OCI-LY7 (cell line): ENCODE measurements at regions of chr4 and their contacts with region 1.

Region 1: DNA sequence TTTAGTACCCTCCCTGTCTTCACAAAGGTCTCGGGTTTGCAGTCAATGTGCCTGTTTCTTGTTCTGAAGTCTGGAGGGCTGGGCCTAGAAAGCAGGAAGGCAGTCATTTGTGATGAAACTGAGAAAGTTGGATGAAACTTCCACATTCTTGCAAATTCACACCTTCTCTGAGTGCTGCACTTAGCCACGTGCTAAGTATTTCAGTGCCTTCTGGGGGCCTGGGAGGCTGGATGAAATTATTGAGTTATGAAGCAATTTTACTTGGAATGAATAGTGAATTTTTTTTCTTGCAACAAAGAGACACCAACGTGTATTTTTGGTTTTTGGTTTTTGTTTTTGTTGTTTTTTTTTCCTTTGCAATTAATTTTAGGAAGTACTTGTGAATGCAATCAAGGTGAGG is 71.2 kb downstream of the MSX1 start:
- DNase-seq: no peak
- H3K4me3 ChIP-seq: no peak overlapping the region
- H3K27ac ChIP-seq: no peak overlapping the region
- H3K4me1 ChIP-seq: no peaks in the 10 kb centered on the region
- CTCF ChIP-seq: no peak

Region 2: GRCh38 chr4:4507923-4508322 is 422.8 kb before region 1 on chr4:
- CTCF ChIA-PET with region 1: no interaction called
- POLR2A ChIA-PET with region 1: no interaction called
- intact Hi-C with region 1: no loop called
- DNase-seq: peak; percentile 40
- H3K4me3 ChIP-seq: no peak overlapping the region
- H3K27ac ChIP-seq: no peak overlapping the region
- H3K4me1 ChIP-seq: peaks cover 3% of the 10 kb centered on the region
- CTCF ChIP-seq: peak; percentile 83

Region 3: GRCh38 chr4:4941741-4942140 is 11.1 kb after region 1 on chr4:
- CTCF ChIA-PET with region 1: no interaction called
- POLR2A ChIA-PET with region 1: interaction called, 11 read pairs
- intact Hi-C with region 1: no loop called
- DNase-seq: peak; percentile 57
- H3K4me3 ChIP-seq: no peak overlapping the region
- H3K27ac ChIP-seq: peak overlapping the region; percentile 11
- H3K4me1 ChIP-seq: peaks cover 38% of the 10 kb centered on the region
- CTCF ChIP-seq: no peak